HCT116 (cell line): ENCODE measurements at regions of chr6 and their contacts with region 1.

Region 1: GRCh38 chr6:33200219-33201146 is at the starts of genes RXRB and SLC39A7:
- DNase-seq: peak; percentile 98
- ATAC-seq: peak; percentile 61
- H3K4me3 ChIP-seq: peak within 1 kb of the TSS; percentile 63 to 69
- H3K27ac ChIP-seq: peak within 1 kb of the TSS; percentile 94
- H3K4me1 ChIP-seq: peaks cover 35 to 60% of the 10 kb centered on the region in 2 experiments
- H3K27me3 ChIP-seq: no peaks in the 10 kb centered on the region
- CTCF ChIP-seq: no peak
- POLR2A ChIP-seq: no peak
- RAD21 ChIP-seq: no peak
- total RNA-seq, gene RXRB: 49.9 TPM
- total RNA-seq, gene SLC39A7: 130 TPM

Region 2: GRCh38 chr6:33161354-33162331 is 38.8 kb before region 1 on chr6:
- CTCF ChIA-PET with region 1: interaction called, 3 read pairs
- POLR2A ChIA-PET with region 1: no interaction called
- RAD21 ChIA-PET with region 1: interaction called in 1 of 2 experiments, 3 read pairs
- intact Hi-C with region 1: loop called (anchors 1 kb)
- DNase-seq: peak; percentile 18
- ATAC-seq: peak; percentile 89
- H3K4me3 ChIP-seq: peak overlapping the region; percentile 52 to 61
- H3K27ac ChIP-seq: peak overlapping the region; percentile 40
- H3K4me1 ChIP-seq: peaks cover 11 to 29% of the 10 kb centered on the region in 2 experiments
- H3K27me3 ChIP-seq: no peaks in the 10 kb centered on the region
- CTCF ChIP-seq: peak; percentile 72 to 91 (median 90); a peak in 5 of 6 replicates
- POLR2A ChIP-seq: peak; percentile 17
- RAD21 ChIP-seq: peak; percentile 68

Region 3: GRCh38 chr6:33417903-33418689 is 217.6 kb after region 1 on chr6 and contains the start of gene CUTA:
- CTCF ChIA-PET with region 1: no interaction called
- POLR2A ChIA-PET with region 1: no interaction called
- RAD21 ChIA-PET with region 1: no interaction called
- intact Hi-C with region 1: loop called (anchors 10 kb)
- DNase-seq: peak; percentile 99
- ATAC-seq: peak; percentile 92
- H3K4me3 ChIP-seq: peak within 1 kb of the TSS; percentile 86 to 94
- H3K27ac ChIP-seq: peak within 1 kb of the TSS; percentile 93
- H3K4me1 ChIP-seq: peaks cover 13 to 29% of the 10 kb centered on the region in 2 experiments
- H3K27me3 ChIP-seq: no peaks in the 10 kb centered on the region
- CTCF ChIP-seq: peak in 2 of 3 experiments; percentile 48 to 60; a peak in 4 of 6 replicates
- POLR2A ChIP-seq: peak; percentile 32
- RAD21 ChIP-seq: no peak
- total RNA-seq, gene CUTA: 186 TPM